ENCODE measurements at regions of chr2 and their contacts with region 1.

Region 1: GRCh38 chr2:55617175-55618024 is at the start of gene PPP4R3B:
- DNase-seq: peak; percentile 100
- H3K4me3 Mint-ChIP-seq: no peak within 1 kb of the TSS
- H3K27ac Mint-ChIP-seq: no peak within 1 kb of the TSS
- H3K4me1 Mint-ChIP-seq: peaks cover 35% of the 10 kb centered on the region
- H3K27me3 Mint-ChIP-seq: no peaks in the 10 kb centered on the region
- total RNA-seq, gene PPP4R3B: 78.1 and 82.7 TPM in 2 replicates

Region 2: GRCh38 chr2:54570925-54571694 is 1046.3 kb before region 1 on chr2:
- intact Hi-C with region 1: loop called (anchors 5 kb)
- DNase-seq: peak; percentile 95
- H3K4me3 Mint-ChIP-seq: peak overlapping the region; percentile 79
- H3K27ac Mint-ChIP-seq: peak overlapping the region; percentile 96
- H3K4me1 Mint-ChIP-seq: peaks cover 78% of the 10 kb centered on the region
- H3K27me3 Mint-ChIP-seq: no peaks in the 10 kb centered on the region

Region 3: DNA sequence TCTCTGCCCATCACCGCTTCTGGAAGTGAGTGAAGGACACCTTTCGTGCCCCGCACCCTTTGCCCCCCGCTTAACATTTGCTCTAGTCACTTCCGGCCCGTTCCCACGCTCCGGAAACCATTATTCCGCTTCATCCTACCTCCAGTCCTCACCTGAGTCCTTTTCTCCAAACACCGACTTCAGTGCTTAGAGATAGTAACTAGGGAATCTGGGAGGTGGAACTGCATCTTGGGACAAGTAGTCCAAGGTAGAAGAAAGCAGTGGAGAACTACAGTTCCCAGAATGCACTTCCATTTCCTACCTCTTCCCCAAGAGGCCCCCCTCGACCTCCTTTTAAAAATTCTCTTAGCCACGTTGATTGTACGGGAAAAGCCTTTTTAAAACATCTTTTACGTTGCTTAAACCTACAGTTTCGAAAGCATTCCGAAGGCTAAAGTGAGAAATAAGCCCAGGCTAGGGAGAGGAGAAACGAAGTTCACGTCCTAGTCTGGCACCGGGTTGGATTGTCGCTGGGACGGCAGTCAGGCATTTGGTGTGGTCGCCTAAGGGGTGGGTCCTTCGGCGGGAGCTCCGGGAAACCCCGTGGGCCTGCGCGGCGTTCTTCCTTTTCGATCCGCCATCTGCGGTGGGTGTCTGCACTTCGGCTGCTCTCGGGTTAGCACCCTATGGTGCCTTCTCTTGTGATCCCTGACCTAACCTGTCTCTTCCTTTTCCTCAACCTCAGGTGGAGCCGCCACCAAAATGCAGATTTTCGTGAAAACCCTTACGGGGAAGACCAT is 385.1 kb before region 1 on chr2 and contains the starts of genes CLHC1 and RPS27A:
- intact Hi-C with region 1: loop called (anchors 1 kb)
- DNase-seq: peak; percentile 98
- H3K4me3 Mint-ChIP-seq: peak within 1 kb of the TSS; percentile 91
- H3K27ac Mint-ChIP-seq: peak within 1 kb of the TSS; percentile 95
- H3K4me1 Mint-ChIP-seq: peaks cover 50% of the 10 kb centered on the region
- H3K27me3 Mint-ChIP-seq: no peaks in the 10 kb centered on the region
- total RNA-seq, gene CLHC1: 7.3 and 10.1 TPM in 2 replicates
- total RNA-seq, gene RPS27A: 1,064 and 1,070 TPM in 2 replicates

Region 4: GRCh38 chr2:55419679-55420438 is 197.5 kb before region 1 on chr2 and contains the start of gene CCDC88A:
- intact Hi-C with region 1: loop called (anchors 1 kb)
- DNase-seq: peak; percentile 95
- H3K4me3 Mint-ChIP-seq: peak within 1 kb of the TSS; percentile 90
- H3K27ac Mint-ChIP-seq: peak within 1 kb of the TSS; percentile 70
- H3K4me1 Mint-ChIP-seq: peaks cover 17% of the 10 kb centered on the region
- H3K27me3 Mint-ChIP-seq: peaks cover 37% of the 10 kb centered on the region
- total RNA-seq, gene CCDC88A: 9.5 and 9.8 TPM in 2 replicates

Region 5: GRCh38 chr2:55590810-55591440 is 26.5 kb before region 1 on chr2:
- intact Hi-C with region 1: loop called (anchors 1 kb)
- DNase-seq: no peak
- H3K4me3 Mint-ChIP-seq: no peak overlapping the region
- H3K27ac Mint-ChIP-seq: peak overlapping the region; percentile 78
- H3K4me1 Mint-ChIP-seq: peaks cover 11% of the 10 kb centered on the region
- H3K27me3 Mint-ChIP-seq: no peaks in the 10 kb centered on the region